IMR-90 (cell line): ENCODE measurements at regions of chr6 and their contacts with region 1.

Region 1: DNA sequence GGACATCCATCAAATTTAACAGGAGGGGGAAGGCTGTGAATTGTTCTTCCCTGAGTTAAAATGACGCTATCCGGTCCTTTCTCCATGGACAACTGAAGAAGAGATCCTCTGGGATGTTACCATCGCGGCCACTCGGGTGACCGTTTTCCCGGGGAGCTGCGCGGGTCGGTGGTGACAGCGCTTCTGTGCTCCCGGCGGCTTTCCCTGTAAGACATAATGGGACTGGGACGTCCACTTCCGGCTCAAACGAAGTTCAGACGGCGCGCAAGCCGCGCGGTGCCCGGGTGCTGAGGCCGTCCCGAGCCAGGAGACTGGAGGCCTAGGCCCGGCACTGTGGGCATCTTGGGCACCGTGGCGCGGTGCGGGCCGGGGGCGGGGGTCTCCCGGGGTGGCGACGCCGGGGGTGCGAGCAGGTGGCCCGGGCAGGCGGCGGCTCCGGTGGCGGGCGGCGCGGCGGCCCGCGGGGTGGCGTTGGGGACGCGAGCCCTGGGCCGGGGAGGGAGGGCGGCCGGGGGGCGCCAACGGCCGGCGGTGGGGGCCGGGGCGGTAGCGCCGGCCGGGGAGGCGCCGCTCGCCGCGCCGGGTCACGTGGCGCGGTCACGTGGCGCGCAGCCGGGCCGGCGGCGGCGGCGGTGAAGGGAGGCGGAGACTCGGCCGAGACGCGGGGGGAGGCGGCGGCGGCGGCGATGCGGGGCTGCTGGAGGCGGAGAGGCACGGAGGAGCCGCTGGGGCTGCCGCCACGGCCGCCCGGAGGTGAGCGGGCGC is 63.6 kb downstream of the GTF2H5 start:
- DNase-seq: peak; percentile 58
- ATAC-seq: peak; percentile 86
- H3K4me3 ChIP-seq: peak overlapping the region; percentile 81
- H3K27ac ChIP-seq: peak overlapping the region; percentile 95
- H3K4me1 ChIP-seq: peaks cover 3% of the 10 kb centered on the region
- H3K27me3 ChIP-seq: no peaks in the 10 kb centered on the region
- CTCF ChIP-seq: no peak
- POLR2A ChIP-seq: peak; percentile 49; the same call in 1 of the 2 replicates
- RAD21 ChIP-seq: no peak

Region 2: DNA sequence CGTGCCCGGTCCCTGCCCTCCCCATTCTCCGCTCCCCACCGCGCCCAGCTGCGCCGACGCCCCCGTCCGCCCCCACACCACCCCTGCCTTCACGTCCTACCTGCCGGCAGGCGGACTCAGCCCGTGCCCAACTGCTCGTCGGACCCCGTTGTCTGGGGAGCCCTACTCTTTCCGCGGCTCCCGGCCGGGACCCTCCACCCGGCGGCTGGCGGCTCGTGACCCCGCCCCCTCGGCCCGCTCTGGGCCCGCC is 63.8 kb before region 1 on chr6 and contains the start of gene SERAC1:
- CTCF ChIA-PET with region 1: no interaction called
- POLR2A ChIA-PET with region 1: no interaction called
- dilution Hi-C with region 1: no loop called
- in situ Hi-C with region 1: no loop called
- intact Hi-C with region 1: no loop called
- DNase-seq: no peak
- ATAC-seq: no peak
- H3K4me3 ChIP-seq: peak within 1 kb of the TSS; percentile 96
- H3K27ac ChIP-seq: peak within 1 kb of the TSS; percentile 92
- H3K4me1 ChIP-seq: peaks cover 6% of the 10 kb centered on the region
- H3K27me3 ChIP-seq: no peaks in the 10 kb centered on the region
- CTCF ChIP-seq: no peak
- POLR2A ChIP-seq: no peak
- RAD21 ChIP-seq: no peak
- total RNA-seq, gene SERAC1: 15.6 and 16.9 TPM in 2 replicates

Region 3: GRCh38 chr6:158249340-158249836 is 17.7 kb after region 1 on chr6:
- CTCF ChIA-PET with region 1: no interaction called
- POLR2A ChIA-PET with region 1: no interaction called
- dilution Hi-C with region 1: no loop called
- in situ Hi-C with region 1: no loop called
- intact Hi-C with region 1: no loop called
- DNase-seq: no peak
- ATAC-seq: no peak
- H3K4me3 ChIP-seq: no peak overlapping the region
- H3K27ac ChIP-seq: no peak overlapping the region
- H3K4me1 ChIP-seq: no peaks in the 10 kb centered on the region
- H3K27me3 ChIP-seq: no peaks in the 10 kb centered on the region
- CTCF ChIP-seq: no peak
- POLR2A ChIP-seq: no peak
- RAD21 ChIP-seq: no peak

Region 4: DNA sequence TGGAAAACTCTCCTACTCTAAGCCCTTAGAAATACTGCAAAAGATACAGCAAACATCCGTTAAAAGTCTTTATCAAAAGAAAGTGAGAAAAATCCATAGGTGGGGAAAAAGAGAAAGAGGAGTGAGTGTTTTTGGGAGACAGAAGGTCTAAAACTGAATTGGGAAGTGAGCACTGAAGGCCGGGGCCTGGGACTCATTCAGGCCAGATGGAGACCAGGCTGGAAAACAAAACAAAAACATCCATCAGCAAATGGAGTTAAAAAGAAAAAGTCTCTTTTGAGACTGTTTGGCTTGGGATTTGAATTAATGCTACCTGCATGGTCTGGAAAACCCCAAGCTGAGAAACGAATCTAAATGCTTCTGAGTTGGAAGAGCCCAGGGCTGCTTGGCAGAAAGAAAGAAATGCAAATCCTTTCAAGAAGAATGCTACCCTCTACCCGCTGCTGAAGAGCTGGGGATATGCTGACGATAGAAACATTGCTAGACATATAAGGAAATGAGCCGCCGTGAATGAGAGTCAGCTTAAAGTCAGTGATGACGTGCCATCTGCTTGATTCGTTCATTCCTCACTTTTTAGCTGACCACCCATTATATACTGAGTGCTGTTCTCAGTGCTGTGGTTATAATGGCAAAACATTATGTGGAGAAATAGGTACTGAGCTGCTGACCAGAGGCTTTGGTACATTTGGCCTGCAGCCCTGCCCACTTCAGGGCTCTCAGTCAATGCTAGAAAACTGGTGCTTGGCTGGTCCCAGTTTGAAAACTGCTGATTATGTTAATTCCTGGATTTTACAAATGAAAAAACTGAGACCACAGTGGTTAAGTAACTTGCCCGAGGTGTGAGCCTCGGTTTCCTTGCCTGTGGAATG is 52.5 kb after region 1 on chr6:
- CTCF ChIA-PET with region 1: no interaction called
- POLR2A ChIA-PET with region 1: no interaction called
- dilution Hi-C with region 1: no loop called
- in situ Hi-C with region 1: no loop called
- intact Hi-C with region 1: loop called (anchors 2 kb)
- DNase-seq: peak; percentile 98
- ATAC-seq: peak; percentile 90
- H3K4me3 ChIP-seq: peak overlapping the region; percentile 4; the same call in 1 of the 2 replicates
- H3K27ac ChIP-seq: peak overlapping the region; percentile 86
- H3K4me1 ChIP-seq: peaks cover 13% of the 10 kb centered on the region
- H3K27me3 ChIP-seq: no peaks in the 10 kb centered on the region
- CTCF ChIP-seq: no peak
- POLR2A ChIP-seq: peak; percentile 61
- RAD21 ChIP-seq: no peak

Region 5: GRCh38 chr6:158357566-158358216 is 126.0 kb after region 1 on chr6:
- CTCF ChIA-PET with region 1: no interaction called
- POLR2A ChIA-PET with region 1: no interaction called
- dilution Hi-C with region 1: no loop called
- in situ Hi-C with region 1: no loop called
- intact Hi-C with region 1: loop called (anchors 10 kb)
- DNase-seq: no peak
- ATAC-seq: no peak
- H3K4me3 ChIP-seq: no peak overlapping the region
- H3K27ac ChIP-seq: no peak overlapping the region
- H3K4me1 ChIP-seq: peaks cover 9% of the 10 kb centered on the region
- H3K27me3 ChIP-seq: no peaks in the 10 kb centered on the region
- CTCF ChIP-seq: no peak
- POLR2A ChIP-seq: no peak
- RAD21 ChIP-seq: no peak

Region 6: GRCh38 chr6:158596861-158597260 is 365.1 kb after region 1 on chr6:
- CTCF ChIA-PET with region 1: no interaction called
- POLR2A ChIA-PET with region 1: no interaction called
- dilution Hi-C with region 1: no loop called
- in situ Hi-C with region 1: loop called (anchors 5 kb)
- intact Hi-C with region 1: no loop called
- DNase-seq: no peak
- ATAC-seq: no peak
- H3K4me3 ChIP-seq: no peak overlapping the region
- H3K27ac ChIP-seq: no peak overlapping the region
- H3K4me1 ChIP-seq: peaks cover 3% of the 10 kb centered on the region; the same call in 1 of the 2 replicates
- H3K27me3 ChIP-seq: no peaks in the 10 kb centered on the region
- CTCF ChIP-seq: no peak
- POLR2A ChIP-seq: no peak
- RAD21 ChIP-seq: no peak